GM10248 (cell line): ENCODE measurements at regions of chr17 and their contacts with region 1.

Region 1: DNA sequence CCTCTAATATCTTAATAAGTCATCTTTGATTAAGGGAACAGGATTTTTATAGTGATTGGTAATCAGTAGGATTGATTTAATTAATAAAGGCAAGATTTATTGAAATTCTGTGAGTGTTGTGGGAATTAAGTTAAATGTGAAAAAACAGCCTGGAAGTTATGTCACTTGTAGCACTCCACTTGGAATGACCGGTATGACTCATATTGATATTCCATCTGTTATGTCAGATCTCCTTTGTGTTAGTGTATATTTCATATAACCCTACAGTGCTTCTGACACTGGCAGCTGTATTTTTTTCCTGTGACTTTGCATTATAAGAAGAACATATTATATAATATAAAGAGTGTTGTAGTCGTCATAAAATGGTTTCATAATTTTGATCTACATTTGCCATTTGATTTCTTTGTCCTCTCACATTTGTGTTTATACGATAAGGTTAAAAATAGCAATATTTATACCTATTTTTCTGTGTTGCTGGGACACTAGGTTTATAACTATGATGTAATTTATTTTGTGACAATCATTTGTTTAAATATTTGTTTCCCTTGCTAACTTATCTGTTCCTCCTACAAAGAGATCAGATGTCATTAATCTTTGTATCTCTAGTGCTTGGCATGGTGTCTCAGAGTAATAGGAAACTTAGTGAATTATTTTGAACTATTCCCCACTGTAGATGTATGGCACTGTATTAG is 249.0 kb downstream of the BCAS3 start:
- DNase-seq: no peak
- CTCF ChIP-seq: no peak

Region 2: GRCh38 chr17:60941028-60941427 is 14.4 kb after region 1 on chr17:
- CTCF ChIA-PET with region 1: interaction called, 10 read pairs
- POLR2A ChIA-PET with region 1: no interaction called
- DNase-seq: no peak
- CTCF ChIP-seq: no peak

Region 3: DNA sequence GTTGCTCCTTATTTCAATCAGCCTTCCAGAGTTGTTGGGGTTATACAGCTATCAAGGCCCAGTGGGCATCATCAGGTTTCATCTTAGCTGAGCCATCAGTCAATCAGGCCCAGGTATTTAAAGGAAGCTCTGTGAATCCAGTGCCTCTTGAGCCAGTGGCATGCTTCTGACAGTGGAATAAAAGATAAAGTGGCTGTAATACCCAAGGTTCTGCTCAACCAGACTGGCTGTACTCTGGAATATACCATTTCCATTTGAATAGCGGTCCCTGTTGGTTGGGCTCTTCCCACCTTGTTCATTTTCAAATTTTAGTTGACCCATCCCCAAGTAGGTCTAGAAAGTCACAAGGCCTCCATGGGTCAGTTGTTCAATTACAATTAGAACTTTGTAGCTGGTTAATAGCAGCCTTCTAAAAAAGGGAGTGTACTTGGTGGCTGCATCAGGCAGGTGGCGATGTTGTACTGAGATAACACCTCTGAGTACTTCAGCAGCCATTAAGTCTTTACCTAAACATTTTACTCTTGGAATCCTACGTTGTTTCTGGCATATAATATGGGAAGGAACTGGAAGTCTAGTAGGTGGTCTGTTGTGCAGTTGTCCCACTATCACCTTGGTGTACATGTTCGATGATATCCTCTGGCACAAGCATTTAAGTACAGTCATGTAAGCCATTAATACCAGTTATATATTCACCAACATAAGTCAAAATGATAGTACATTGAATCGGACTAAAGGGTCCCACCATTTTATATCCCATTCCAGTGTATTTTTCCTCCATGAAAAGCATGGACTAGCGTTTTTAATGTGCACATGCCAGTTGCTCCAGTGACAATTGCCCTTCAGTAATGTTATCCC is 45.1 kb after region 1 on chr17:
- CTCF ChIA-PET with region 1: no interaction called
- POLR2A ChIA-PET with region 1: no interaction called
- DNase-seq: peak; percentile 42
- CTCF ChIP-seq: peak; percentile 59

Region 4: GRCh38 chr17:61057257-61057656 is 130.6 kb after region 1 on chr17:
- CTCF ChIA-PET with region 1: no interaction called
- POLR2A ChIA-PET with region 1: no interaction called
- DNase-seq: no peak
- CTCF ChIP-seq: no peak